ENCODE measurements at regions of chr9 and their contacts with region 1.

Region 1: DNA sequence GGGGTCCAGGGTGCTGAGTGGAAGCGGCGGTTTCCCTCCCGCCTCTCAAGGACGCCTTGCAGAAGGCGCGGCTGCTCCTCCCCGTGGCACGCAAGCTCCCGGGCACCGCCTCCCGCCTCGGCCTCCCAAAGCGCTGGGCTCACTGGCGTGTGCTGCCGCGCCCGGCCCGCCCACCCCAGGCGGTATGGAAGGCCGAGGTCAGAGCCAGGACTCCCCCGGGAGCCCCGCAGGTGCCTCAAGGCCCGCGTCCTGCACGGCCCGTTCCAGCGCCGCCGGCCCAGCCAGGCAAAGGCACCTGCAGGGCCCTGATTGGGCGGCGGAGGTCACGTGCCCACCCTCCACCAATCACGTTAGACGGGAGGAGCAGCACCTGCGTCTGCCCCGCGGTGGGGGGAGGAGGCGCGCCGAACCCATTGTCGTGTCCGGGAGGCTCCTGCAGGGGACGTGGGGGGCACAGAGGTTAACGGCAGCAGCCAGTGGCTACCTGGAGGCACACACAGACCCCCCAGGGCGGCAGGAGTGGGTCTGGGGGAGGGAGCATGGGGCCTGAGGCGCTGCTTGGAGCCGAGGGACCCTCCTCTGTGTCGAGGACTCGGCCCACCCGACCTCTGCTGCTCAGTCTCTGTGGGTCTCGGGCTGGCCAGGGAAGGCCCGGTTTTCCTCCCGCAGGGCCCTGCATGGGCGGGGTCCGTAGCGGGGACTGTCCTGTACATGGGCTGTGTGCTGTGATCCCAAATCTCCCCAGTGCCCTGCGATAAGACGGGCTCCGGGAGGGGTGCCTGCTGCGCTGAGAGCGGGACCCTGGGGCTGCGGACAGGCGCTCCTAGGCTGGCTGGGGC is 2.0 kb upstream of the LCN12 start:
- DNase-seq: peak; percentile 88 to 96
- H3K4me3 ChIP-seq: peak overlapping the region; percentile 62 to 83
- H3K27ac ChIP-seq: peak overlapping the region; percentile 81 to 88
- H3K4me1 ChIP-seq: peaks cover 0 to 12% of the 10 kb centered on the region in 2 donors
- H3K27me3 ChIP-seq: no peaks in the 10 kb centered on the region
- CTCF ChIP-seq: peak in 2 of 3 experiments; percentile 10 to 25

Region 2: DNA sequence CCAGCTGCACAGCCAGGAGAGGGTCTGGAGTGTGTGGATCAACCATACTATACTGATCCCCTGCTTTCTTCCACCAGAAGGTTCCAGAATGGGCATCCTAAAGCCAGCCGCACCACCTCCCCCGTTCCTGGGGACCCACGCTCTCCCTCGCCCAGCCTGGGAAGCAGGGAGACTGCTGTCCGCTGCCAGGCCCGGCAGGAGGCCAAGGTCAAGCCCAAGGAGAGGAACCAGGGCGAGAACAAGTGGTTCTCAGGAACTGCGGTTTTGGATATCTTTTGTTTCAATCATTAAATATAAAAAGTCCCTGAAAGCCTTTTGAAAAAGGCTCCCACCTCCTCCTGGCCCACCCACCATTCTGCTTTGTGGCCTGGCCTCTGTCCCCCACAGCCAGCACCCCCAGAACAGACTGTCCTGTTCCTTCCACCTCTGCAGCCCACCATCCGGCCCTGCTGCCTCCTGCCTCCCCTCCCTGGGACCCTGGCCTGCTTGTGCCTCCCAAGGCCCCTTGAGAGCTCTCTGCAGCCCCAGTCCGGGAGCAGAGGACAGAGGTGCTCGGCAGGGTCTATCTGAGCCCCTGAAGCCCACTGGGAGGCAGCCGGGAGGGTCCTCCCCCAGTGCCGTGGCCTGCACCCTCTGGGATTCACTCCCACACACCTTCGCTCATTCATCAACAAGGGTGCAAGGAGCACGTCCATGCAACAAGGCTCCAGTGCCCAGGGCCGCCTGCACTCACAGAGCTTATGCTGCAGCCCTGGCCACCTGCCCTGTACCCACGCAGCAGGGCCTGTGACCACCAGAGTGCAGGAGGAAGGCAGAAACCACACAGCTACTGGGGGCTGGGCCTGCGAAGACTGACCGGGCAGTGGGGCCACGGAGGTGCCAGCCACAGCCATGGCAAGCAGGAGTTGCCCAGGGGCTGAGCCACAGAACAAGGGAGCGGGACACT is 201.1 kb before region 1 on chr9:
- intact Hi-C with region 1: no loop called
- DNase-seq: no peak
- H3K4me3 ChIP-seq: no peak overlapping the region
- H3K27ac ChIP-seq: no peak overlapping the region
- H3K4me1 ChIP-seq: no peaks in the 10 kb centered on the region
- H3K27me3 ChIP-seq: no peaks in the 10 kb centered on the region
- CTCF ChIP-seq: no peak

Region 3: GRCh38 chr9:136965771-136966484 is 15.9 kb after region 1 on chr9:
- intact Hi-C with region 1: no loop called
- DNase-seq: no peak
- H3K4me3 ChIP-seq: peak overlapping the region in 1 of 2 donors; percentile 10
- H3K27ac ChIP-seq: no peak overlapping the region
- H3K4me1 ChIP-seq: peaks cover 4 to 14% of the 10 kb centered on the region in 2 donors
- H3K27me3 ChIP-seq: no peaks in the 10 kb centered on the region
- CTCF ChIP-seq: no peak

Region 4: DNA sequence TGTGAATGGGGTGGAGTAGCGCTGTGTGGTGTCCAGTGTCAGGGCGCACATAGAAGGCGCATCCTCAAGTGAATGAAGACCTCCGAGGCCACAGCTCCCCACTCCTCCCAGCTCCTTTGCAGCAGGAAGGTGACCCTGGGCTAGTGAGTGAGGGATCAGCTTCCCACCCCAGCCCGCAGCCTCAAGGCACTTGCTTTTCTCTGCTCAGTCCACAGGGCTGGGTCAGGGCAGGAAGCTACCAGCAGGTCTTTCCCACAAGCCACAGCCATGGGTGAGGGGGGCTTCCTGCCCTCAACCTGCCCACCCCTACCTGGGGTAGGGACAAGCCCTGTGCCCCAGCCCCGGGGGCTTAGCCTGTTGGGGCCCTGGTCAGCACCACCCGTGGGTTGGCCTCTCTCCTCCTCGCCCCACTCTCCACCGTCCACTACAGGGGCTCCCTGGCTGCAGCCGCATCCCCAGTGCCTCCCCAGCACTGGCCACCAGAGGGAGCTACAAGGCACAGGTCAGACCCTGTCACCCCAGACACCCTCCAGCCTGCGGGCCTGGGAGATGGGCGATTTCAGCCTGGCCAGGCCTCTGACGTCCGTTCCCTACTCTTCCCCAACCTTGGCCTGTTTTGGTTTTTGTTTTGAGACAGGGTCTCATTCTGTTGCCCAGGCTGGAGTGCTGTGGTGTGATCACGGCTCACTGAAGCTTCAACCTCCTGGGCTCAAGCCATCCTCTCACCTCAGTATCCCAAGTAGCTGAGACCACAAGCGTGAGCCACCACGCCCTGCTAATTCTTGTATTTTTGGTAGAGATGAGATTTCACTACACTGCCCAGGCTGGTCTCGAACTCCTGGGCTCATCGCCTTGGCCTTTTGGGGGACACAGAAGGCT is 79.3 kb after region 1 on chr9:
- intact Hi-C with region 1: loop called (anchors 2 kb)
- DNase-seq: peak in 1 of 2 donors; percentile 87
- H3K4me3 ChIP-seq: peak overlapping the region; percentile 71 to 94
- H3K27ac ChIP-seq: no peak overlapping the region
- H3K4me1 ChIP-seq: peaks cover 17% of the 10 kb centered on the region in 2 donors
- H3K27me3 ChIP-seq: no peaks in the 10 kb centered on the region
- CTCF ChIP-seq: peak; percentile 68 to 88 (median 86)